ENCODE measurements at regions of chr2 and their contacts with region 1.

Region 1: GRCh38 chr2:236343400-236344161 is 79.4 kb upstream of the ASB18 start:
- DNase-seq: peak; percentile 85
- H3K4me3 ChIP-seq: no peak overlapping the region
- H3K27ac ChIP-seq: no peak overlapping the region
- H3K27me3 ChIP-seq: no peaks in the 10 kb centered on the region
- CTCF ChIP-seq: peak; percentile 86

Region 2: DNA sequence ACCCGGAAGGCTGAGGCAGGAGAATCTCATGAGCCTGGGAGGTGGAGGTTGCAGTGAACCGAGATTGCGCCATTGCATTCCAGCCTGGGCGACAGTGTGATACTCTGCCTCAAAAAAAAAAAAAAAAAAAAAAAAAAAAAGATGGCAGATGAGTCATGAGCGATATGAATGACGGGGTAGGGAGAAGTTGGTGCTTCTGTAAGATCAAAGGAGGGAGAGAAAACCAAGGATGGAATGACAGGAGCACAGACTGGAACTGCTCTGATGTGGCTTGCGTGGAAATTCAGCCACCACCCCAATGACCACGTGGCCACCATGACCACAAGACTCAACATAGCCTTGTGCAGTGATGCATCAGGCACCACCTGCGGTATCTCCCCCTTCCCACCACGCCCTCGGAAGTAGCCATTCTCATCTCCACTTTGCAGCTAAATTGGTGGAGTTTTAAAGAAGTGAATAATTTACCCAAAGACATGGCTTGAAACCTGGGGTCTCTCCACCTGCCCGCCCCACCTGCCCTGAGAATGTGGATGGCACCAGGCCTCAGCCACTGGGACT is 322.1 kb after region 1 on chr2:
- in situ Hi-C with region 1: no loop called
- DNase-seq: no peak
- H3K4me3 ChIP-seq: no peak overlapping the region
- H3K27ac ChIP-seq: no peak overlapping the region
- H3K27me3 ChIP-seq: no peaks in the 10 kb centered on the region
- CTCF ChIP-seq: no peak

Region 3: DNA sequence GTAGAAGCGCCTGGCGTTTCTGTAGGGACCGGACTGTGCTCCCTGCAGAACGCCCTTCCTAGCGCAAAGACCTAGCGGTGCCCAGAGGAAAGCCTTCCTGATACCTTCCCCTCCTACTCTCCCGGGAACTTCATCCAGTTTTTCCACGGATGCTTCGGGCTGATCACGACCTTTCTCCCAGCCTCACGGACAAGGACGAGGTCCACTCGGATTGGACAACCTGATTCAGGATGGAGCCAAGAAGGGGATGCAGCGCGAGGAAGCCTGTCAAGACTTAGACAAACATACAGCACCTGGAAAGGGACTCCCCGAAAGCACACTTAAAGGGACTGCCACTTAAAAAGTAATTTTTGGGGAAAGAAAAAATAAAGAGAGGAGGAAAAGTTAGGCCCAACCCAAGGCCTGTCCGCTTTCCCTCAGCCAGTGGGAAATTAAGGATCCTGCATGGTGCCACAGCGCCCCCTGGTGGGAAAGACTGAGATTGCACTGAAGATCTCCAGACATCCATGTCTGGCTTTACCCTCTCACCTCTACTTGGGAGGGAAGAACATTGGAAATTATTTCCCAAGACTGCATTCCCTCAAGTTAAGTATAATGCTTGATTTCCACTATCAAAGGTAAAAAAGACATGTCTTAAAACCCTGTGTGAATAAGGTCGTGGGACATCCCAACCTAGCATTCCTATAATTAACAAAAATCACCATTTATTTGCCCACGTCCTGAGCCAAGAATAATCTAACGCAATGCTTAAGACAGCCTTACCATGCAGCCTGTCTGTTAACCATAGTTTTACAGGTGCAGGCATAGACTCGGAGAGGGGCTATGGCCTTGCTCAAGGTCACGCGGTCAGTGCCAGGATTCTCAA is 728.7 kb after region 1 on chr2:
- in situ Hi-C with region 1: loop called (anchors 25 kb)
- DNase-seq: peak; percentile 75
- H3K4me3 ChIP-seq: no peak overlapping the region
- H3K27ac ChIP-seq: no peak overlapping the region
- H3K27me3 ChIP-seq: no peaks in the 10 kb centered on the region
- CTCF ChIP-seq: peak; percentile 97